Mammary epithelial cell (primary cell): ENCODE measurements at regions of chr15 and their contacts with region 1.

Region 1: DNA sequence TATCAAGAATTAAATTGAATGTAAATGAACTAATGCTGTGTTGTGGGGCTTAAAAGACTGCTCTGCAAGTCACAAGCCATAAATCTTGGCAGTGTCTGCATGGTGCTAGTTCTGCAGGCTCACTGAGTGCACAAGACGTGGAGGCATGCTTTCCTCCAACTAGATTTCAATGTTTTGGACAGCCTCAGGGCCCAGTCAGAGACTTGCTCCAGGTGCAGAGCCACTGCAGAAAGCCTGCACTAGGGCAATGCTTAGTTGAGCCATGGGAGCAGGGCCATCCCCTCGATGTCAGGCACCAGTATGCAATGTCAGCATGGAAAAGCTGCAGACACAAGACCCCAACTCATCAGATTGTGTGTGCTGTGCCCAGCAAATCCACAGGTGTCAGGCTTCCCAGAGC is 234.5 kb upstream of the CDIN1 start:
- DNase-seq: no peak
- H3K4me3 ChIP-seq: no peak overlapping the region
- H3K27ac ChIP-seq: no peak overlapping the region
- H3K4me1 ChIP-seq: no peaks in the 10 kb centered on the region
- H3K27me3 ChIP-seq: no peaks in the 10 kb centered on the region
- CTCF ChIP-seq: no peak

Region 2: GRCh38 chr15:36323615-36324014 is 21.3 kb before region 1 on chr15:
- CTCF ChIA-PET with region 1: no interaction called
- dilution Hi-C with region 1: no loop called
- in situ Hi-C with region 1: no loop called
- intact Hi-C with region 1: loop called (anchors 2 kb)
- DNase-seq: no peak
- H3K4me3 ChIP-seq: no peak overlapping the region
- H3K27ac ChIP-seq: no peak overlapping the region
- H3K4me1 ChIP-seq: no peaks in the 10 kb centered on the region
- H3K27me3 ChIP-seq: no peaks in the 10 kb centered on the region
- CTCF ChIP-seq: no peak

Region 3: GRCh38 chr15:36529296-36530011 is 184.6 kb after region 1 on chr15:
- CTCF ChIA-PET with region 1: no interaction called
- dilution Hi-C with region 1: no loop called
- in situ Hi-C with region 1: no loop called
- intact Hi-C with region 1: no loop called
- DNase-seq: no peak
- H3K4me3 ChIP-seq: no peak overlapping the region
- H3K27ac ChIP-seq: no peak overlapping the region
- H3K4me1 ChIP-seq: no peaks in the 10 kb centered on the region
- H3K27me3 ChIP-seq: no peaks in the 10 kb centered on the region
- CTCF ChIP-seq: no peak